ENCODE measurements at regions of chr5 and their contacts with region 1.

Region 1: DNA sequence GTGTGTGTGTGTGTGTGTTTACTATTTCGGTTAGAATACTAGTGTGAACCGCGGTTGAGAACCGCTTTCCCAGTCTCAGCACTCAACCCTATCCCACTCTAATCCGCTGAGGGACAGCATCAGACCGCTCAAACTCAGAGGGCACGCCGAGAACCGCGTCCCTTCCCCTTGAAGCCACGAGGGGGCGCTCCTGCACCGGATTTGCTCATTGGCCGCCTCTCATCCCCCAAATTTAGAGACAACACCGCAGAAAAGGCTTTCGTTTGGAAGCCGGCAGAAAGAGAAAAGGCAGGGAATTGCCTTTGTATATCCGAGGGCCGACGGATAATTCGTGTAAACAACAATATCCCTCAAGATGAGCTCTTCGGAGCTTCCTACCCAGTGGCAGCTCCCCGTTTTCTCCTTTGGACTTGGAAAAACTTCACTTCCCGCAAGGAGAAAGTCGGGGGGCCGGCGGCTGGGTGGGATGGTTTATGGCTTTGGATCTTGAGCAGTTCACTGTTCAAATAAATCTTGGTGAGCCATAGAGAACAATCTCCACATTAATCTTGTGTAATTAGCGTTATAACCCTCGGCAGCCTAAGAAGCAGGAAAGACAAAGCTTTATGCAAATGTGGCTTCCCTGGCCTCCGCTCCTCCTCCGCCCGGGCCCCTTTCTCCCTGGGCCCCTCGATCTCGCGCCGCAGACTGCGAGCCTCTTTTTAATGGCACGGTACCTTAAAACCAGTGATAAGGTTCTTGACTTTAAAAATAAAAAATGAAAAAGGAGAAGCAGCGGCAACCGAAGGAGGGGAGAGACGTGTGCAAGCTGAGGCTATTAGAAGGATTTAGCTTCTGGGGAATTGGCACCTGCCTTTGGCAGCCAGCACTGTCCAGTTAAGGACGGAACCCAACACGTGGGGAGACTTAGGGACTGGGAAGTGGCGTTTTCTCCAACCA is 296.8 kb downstream of the PARP8 start:
- DNase-seq: peak; percentile 32
- ATAC-seq: peak; percentile 94
- H3K4me3 ChIP-seq: peak overlapping the region; percentile 31
- H3K27ac ChIP-seq: no peak overlapping the region
- H3K4me1 ChIP-seq: peaks cover 2% of the 10 kb centered on the region; the same call in 1 of the 2 replicates
- H3K27me3 ChIP-seq: peaks cover 47% of the 10 kb centered on the region
- CTCF ChIP-seq: peak; percentile 88
- POLR2A ChIP-seq: no peak
- RAD21 ChIP-seq: peak; percentile 73

Region 2: GRCh38 chr5:51382763-51383490 is 419.7 kb after region 1 on chr5 and contains the start of gene ISL1:
- CTCF ChIA-PET with region 1: no interaction called
- POLR2A ChIA-PET with region 1: no interaction called
- dilution Hi-C with region 1: no loop called
- in situ Hi-C with region 1: no loop called
- intact Hi-C with region 1: no loop called
- DNase-seq: peak; percentile 55
- ATAC-seq: peak; percentile 94
- H3K4me3 ChIP-seq: peak within 1 kb of the TSS; percentile 34
- H3K27ac ChIP-seq: no peak within 1 kb of the TSS
- H3K4me1 ChIP-seq: no peaks in the 10 kb centered on the region
- H3K27me3 ChIP-seq: peaks cover 53% of the 10 kb centered on the region
- CTCF ChIP-seq: no peak
- POLR2A ChIP-seq: no peak
- RAD21 ChIP-seq: no peak
- total RNA-seq, gene ISL1: under 0.01 TPM in 1 of 2 replicates, not detected in the other

Region 3: GRCh38 chr5:52007230-52007858 is 1044.1 kb after region 1 on chr5:
- CTCF ChIA-PET with region 1: interaction called, 4 read pairs
- POLR2A ChIA-PET with region 1: no interaction called
- dilution Hi-C with region 1: no loop called
- in situ Hi-C with region 1: loop called (anchors 10 kb)
- intact Hi-C with region 1: loop called (anchors 1 kb)
- DNase-seq: peak; percentile 38
- ATAC-seq: 0 out of 2 replicates have a peak, but pooled peaks have one; percentile 42
- H3K4me3 ChIP-seq: no peak overlapping the region
- H3K27ac ChIP-seq: no peak overlapping the region
- H3K4me1 ChIP-seq: no peaks in the 10 kb centered on the region
- H3K27me3 ChIP-seq: no peaks in the 10 kb centered on the region
- CTCF ChIP-seq: peak; percentile 74
- POLR2A ChIP-seq: no peak
- RAD21 ChIP-seq: peak; percentile 77

Region 4: DNA sequence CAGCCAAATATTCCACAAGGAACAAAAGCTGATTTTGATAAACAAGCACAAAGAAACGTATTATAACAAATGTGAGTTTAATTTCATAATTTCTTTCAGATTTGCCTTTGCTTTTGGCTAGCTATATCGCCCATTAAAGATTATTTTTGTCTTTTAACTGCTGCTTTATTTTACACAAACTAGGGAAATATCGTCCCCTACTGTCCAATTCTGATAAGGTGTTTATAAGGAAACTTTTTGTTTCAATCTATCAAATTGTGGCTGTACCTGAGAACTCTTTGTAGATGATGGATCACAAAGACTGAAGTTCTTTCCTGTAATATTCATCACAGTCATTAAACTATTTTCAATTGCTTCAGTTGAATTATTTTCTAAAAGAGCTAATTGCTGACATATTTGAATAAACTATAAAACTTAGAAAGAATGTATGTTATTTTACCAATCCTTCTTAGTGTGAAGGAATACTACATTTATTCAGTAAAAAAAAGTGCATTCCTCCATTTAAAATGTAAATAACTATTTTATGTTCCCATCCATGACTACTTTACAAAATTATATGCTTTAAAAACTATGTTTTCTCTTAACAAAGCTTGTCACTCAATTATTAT is 1393.2 kb after region 1 on chr5:
- CTCF ChIA-PET with region 1: interaction called, 3 read pairs
- POLR2A ChIA-PET with region 1: no interaction called
- dilution Hi-C with region 1: no loop called
- in situ Hi-C with region 1: no loop called
- intact Hi-C with region 1: loop called (anchors 1 kb)
- DNase-seq: peak; percentile 2
- ATAC-seq: no peak
- H3K4me3 ChIP-seq: no peak overlapping the region
- H3K27ac ChIP-seq: no peak overlapping the region
- H3K4me1 ChIP-seq: no peaks in the 10 kb centered on the region
- H3K27me3 ChIP-seq: no peaks in the 10 kb centered on the region
- CTCF ChIP-seq: peak; percentile 62
- POLR2A ChIP-seq: no peak
- RAD21 ChIP-seq: peak; percentile 46

Region 5: DNA sequence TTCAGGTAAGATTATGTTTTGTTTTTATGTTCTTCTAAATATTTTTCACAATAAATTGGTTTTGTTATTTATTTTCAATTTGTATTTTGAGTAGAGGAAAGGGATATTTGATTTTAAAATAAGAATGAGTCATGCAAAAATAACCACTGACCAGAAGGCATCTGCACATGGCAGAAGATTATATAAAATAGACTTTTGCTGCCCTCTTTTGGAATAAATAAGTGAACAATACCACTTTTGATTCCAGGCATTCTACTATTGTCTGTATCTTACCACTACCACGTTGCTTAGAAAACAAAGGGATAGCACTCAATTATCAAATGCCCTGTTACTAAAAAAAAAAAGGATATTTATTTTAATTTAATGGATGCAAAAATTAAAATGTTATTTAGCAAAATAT is 1597.2 kb after region 1 on chr5:
- CTCF ChIA-PET with region 1: no interaction called
- POLR2A ChIA-PET with region 1: no interaction called
- dilution Hi-C with region 1: no loop called
- in situ Hi-C with region 1: loop called (anchors 25 kb)
- intact Hi-C with region 1: loop called (anchors 10 kb)
- DNase-seq: no peak
- ATAC-seq: no peak
- H3K4me3 ChIP-seq: no peak overlapping the region
- H3K27ac ChIP-seq: no peak overlapping the region
- H3K4me1 ChIP-seq: no peaks in the 10 kb centered on the region
- H3K27me3 ChIP-seq: no peaks in the 10 kb centered on the region
- CTCF ChIP-seq: no peak
- POLR2A ChIP-seq: no peak
- RAD21 ChIP-seq: no peak

Region 6: GRCh38 chr5:52657247-52657645 is 1694.0 kb after region 1 on chr5:
- CTCF ChIA-PET with region 1: interaction called, 3 read pairs
- POLR2A ChIA-PET with region 1: no interaction called
- dilution Hi-C with region 1: no loop called
- in situ Hi-C with region 1: loop called (anchors 10 kb)
- intact Hi-C with region 1: loop called (anchors 1 kb)
- DNase-seq: peak; percentile 58
- ATAC-seq: peak; percentile 53
- H3K4me3 ChIP-seq: no peak overlapping the region
- H3K27ac ChIP-seq: no peak overlapping the region
- H3K4me1 ChIP-seq: no peaks in the 10 kb centered on the region
- H3K27me3 ChIP-seq: peaks cover 9% of the 10 kb centered on the region
- CTCF ChIP-seq: peak; percentile 61
- POLR2A ChIP-seq: no peak
- RAD21 ChIP-seq: peak; percentile 47

Region 7: GRCh38 chr5:52915176-52915875 is 1952.1 kb after region 1 on chr5:
- CTCF ChIA-PET with region 1: no interaction called
- POLR2A ChIA-PET with region 1: no interaction called
- dilution Hi-C with region 1: no loop called
- in situ Hi-C with region 1: loop called (anchors 25 kb)
- intact Hi-C with region 1: no loop called
- DNase-seq: peak; percentile 75
- ATAC-seq: peak; percentile 96
- H3K4me3 ChIP-seq: peak overlapping the region; percentile 10; the same call in 1 of the 2 replicates
- H3K27ac ChIP-seq: no peak overlapping the region
- H3K4me1 ChIP-seq: no peaks in the 10 kb centered on the region; the same call in 1 of the 2 replicates
- H3K27me3 ChIP-seq: no peaks in the 10 kb centered on the region
- CTCF ChIP-seq: peak; percentile 63
- POLR2A ChIP-seq: no peak
- RAD21 ChIP-seq: peak; percentile 70